BJ (cell line): ENCODE measurements at regions of chr12 and their contacts with region 1.

Region 1: GRCh38 chr12:109844983-109845823 is 12.0 kb upstream of the TRPV4 start:
- DNase-seq: no peak
- H3K4me3 ChIP-seq: peak overlapping the region; percentile 32
- H3K27me3 ChIP-seq: no peaks in the 10 kb centered on the region
- CTCF ChIP-seq: peak; percentile 100

Region 2: DNA sequence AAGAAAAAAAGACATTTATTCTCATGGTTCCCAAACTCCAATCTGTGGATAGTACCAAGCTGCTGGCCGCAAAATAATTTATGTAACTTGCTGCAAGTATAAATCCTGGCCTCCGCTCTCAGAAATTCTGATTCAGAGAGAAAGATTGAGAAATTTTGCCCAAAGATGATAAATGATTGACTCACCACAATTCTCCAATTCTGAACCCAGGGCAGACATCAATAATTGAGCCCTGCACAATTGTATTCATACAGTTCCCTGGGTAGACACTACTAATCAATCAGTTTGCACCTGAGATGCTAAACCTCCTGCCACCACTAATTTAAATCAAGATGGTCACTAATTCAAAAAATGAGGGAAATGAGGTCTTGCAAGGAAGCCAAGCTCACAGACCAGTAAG is 50.2 kb before region 1 on chr12:
- CTCF ChIA-PET with region 1: interaction called, 10 read pairs
- POLR2A ChIA-PET with region 1: no interaction called
- DNase-seq: no peak
- H3K4me3 ChIP-seq: no peak overlapping the region
- H3K27me3 ChIP-seq: no peaks in the 10 kb centered on the region
- CTCF ChIP-seq: no peak

Region 3: GRCh38 chr12:109828236-109828550 is 17.0 kb before region 1 on chr12:
- CTCF ChIA-PET with region 1: interaction called, 31 read pairs
- POLR2A ChIA-PET with region 1: no interaction called
- DNase-seq: no peak
- H3K4me3 ChIP-seq: no peak overlapping the region
- H3K27me3 ChIP-seq: no peaks in the 10 kb centered on the region
- CTCF ChIP-seq: no peak

Region 4: GRCh38 chr12:109858764-109859163 is 13.6 kb after region 1 on chr12:
- CTCF ChIA-PET with region 1: interaction called, 22 read pairs
- POLR2A ChIA-PET with region 1: no interaction called
- DNase-seq: no peak
- H3K4me3 ChIP-seq: no peak overlapping the region
- H3K27me3 ChIP-seq: no peaks in the 10 kb centered on the region
- CTCF ChIP-seq: no peak

Region 5: GRCh38 chr12:109870648-109871047 is 25.4 kb after region 1 on chr12:
- CTCF ChIA-PET with region 1: interaction called, 13 read pairs
- POLR2A ChIA-PET with region 1: interaction called, 3 read pairs
- DNase-seq: no peak
- H3K4me3 ChIP-seq: no peak overlapping the region
- H3K27me3 ChIP-seq: no peaks in the 10 kb centered on the region
- CTCF ChIP-seq: no peak

Region 6: GRCh38 chr12:110224379-110225304 is 379.4 kb after region 1 on chr12:
- CTCF ChIA-PET with region 1: no interaction called
- POLR2A ChIA-PET with region 1: no interaction called
- DNase-seq: peak; percentile 74
- H3K4me3 ChIP-seq: peak overlapping the region; percentile 14
- H3K27me3 ChIP-seq: no peaks in the 10 kb centered on the region
- CTCF ChIP-seq: peak; percentile 73